ENCODE measurements at regions of chr12 and their contacts with region 1.

Region 1: GRCh38 chr12:5988659-5989116 is 43.6 kb upstream of the ANO2 start:
- DNase-seq: no peak
- H3K4me3 ChIP-seq: no peak overlapping the region
- H3K27me3 ChIP-seq: peaks cover 3% of the 10 kb centered on the region
- CTCF ChIP-seq: peak; percentile 99

Region 2: DNA sequence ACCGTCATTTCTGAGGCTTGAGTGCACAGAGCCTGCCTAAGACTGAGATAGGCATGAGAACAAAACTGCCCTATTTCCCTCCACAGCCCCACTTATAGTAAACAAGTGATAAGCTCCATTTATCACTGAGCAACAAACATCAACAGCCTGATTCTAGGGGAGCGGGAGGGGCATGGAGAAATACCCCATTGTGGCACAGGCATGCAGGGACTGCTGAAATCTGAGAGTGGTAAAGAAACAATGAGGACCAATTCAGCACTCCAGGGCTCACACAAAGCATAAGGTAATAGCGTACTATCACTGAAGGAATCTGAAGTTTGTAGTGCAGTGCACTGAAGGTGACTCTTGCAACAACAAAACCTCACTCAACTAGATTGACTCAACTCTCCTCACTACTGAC is 230.3 kb before region 1 on chr12:
- CTCF ChIA-PET with region 1: no interaction called
- POLR2A ChIA-PET with region 1: no interaction called
- DNase-seq: no peak
- H3K4me3 ChIP-seq: no peak overlapping the region
- H3K27me3 ChIP-seq: no peaks in the 10 kb centered on the region
- CTCF ChIP-seq: no peak

Region 3: GRCh38 chr12:5872735-5873134 is 116.0 kb before region 1 on chr12:
- CTCF ChIA-PET with region 1: no interaction called
- POLR2A ChIA-PET with region 1: no interaction called
- DNase-seq: no peak
- H3K4me3 ChIP-seq: no peak overlapping the region
- H3K27me3 ChIP-seq: peaks cover 2% of the 10 kb centered on the region
- CTCF ChIP-seq: peak; percentile 55

Region 4: GRCh38 chr12:5967645-5968415 is 20.9 kb before region 1 on chr12:
- CTCF ChIA-PET with region 1: interaction called, 10 read pairs
- POLR2A ChIA-PET with region 1: no interaction called
- DNase-seq: no peak
- H3K4me3 ChIP-seq: no peak overlapping the region
- H3K27me3 ChIP-seq: peaks cover 4% of the 10 kb centered on the region
- CTCF ChIP-seq: no peak

Region 5: GRCh38 chr12:6033546-6033945 is 44.9 kb after region 1 on chr12:
- CTCF ChIA-PET with region 1: interaction called, 158 read pairs
- POLR2A ChIA-PET with region 1: no interaction called
- DNase-seq: no peak
- H3K4me3 ChIP-seq: no peak overlapping the region
- H3K27me3 ChIP-seq: peaks cover 6% of the 10 kb centered on the region
- CTCF ChIP-seq: no peak

Region 6: DNA sequence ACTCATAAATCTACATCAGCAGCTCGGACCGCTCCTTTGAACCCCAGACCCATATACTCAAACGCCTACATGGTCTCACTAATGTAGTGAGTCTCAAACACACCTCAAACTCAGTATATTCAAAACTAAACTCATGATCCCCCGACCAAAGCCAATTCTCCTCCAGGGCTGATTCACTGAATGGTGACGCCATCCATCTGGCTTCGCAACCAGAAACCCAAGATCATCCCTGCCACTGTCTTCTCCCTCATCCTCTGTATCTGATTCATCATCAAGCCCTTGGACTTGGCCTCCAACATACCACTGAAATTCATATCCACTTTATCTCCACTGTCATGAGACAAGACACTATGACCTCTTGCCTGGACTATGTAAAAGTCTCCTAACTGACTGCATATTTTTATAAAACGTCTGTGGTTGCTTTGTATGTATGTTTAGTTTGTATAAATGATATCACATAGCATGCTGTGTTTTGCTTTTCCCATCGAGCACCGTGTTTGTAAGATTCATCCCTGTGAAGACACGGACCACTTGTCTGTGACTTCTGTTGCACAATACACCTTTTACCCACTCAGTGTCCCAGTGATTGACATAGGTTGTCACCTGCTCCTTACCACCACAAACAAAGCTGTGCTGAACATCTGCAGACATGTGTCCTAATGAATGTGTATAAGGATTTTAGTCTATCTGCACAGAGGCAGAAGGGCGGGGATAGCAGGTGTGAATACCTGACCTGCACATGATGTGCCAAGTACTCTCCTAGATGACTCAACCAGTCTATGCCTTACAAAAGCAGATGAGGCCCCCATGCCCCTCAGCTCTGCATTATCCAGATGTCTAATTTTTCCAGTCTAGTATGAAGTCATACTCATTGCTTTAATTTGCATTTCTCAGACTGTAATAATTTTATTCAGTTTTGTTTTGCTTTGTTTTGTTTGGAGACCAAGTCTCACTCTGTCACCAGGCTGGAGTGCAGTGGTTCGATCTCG is 58.9 kb after region 1 on chr12:
- CTCF ChIA-PET with region 1: interaction called, 16 read pairs
- POLR2A ChIA-PET with region 1: no interaction called
- DNase-seq: peak; percentile 32
- H3K4me3 ChIP-seq: no peak overlapping the region
- H3K27me3 ChIP-seq: no peaks in the 10 kb centered on the region
- CTCF ChIP-seq: no peak

Region 7: DNA sequence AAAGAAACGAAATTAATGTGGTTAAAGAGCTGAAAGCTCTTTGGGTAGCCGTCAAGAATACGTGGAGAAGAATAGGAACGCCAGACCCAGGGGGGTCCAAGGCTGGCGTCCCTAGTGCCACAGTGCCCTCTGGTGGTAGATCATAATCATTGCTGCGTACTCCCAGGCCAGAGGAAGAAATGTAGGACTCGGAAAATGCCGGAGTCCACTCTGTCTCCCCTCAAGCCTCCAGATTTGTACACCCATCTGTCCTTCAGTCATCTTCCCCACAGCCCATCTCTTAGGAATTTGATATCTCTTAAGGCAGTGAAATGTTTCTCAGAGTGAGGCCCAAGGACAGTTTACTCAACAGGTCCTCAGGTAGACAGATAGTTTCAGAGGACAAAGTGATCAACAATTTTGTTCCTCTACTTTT is 296.4 kb after region 1 on chr12:
- CTCF ChIA-PET with region 1: interaction called, 97 read pairs
- POLR2A ChIA-PET with region 1: no interaction called
- DNase-seq: no peak
- H3K4me3 ChIP-seq: no peak overlapping the region
- H3K27me3 ChIP-seq: no peaks in the 10 kb centered on the region
- CTCF ChIP-seq: peak; percentile 90